ENCODE measurements at regions of chr11 and their contacts with region 1.

Region 1: DNA sequence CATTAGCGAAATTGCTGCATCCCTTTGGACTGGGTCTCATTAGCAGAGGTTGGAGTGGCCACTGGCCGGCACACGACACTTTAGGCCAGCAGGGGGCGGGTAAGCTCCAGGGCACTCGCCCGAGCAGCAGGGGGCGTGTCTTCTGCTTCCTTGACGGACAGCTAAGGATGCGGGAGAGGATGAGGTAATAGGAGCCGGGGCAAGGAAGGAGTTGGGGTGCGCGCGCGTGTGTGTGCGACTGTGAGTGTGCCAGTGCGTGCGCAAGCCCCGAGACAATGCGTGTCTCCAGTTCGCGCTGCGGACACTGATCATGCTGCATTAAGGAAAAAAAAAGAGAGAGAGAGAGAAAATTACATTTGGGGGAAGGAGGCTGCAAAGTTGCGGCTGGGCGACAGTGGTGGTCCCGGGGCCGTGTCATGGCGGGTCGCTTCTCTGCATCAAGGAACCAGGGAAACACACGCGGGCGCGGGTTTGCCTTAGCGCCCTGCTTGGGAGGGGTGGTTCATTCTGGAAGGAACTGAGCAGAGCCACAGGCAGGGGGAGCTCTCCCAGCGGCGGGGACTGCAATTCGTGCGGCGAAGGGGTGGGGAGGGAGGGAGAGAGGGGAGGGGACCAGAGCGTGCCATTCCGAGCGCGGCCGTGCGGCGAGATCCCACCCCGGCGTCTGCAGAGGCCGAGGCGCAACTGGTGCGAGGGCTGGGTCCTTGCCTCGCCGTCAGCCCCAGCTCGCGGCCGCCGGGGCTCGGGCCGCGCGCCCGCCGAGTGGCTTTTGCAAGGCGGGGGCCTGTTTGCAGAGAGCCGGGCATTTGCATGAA is at the start of gene DTX4:
- DNase-seq: peak; percentile 95 to 96 (median 95)
- ATAC-seq: peak; percentile 69 to 87 (median 78)
- H3K4me3 ChIP-seq: peak within 1 kb of the TSS; percentile 72 to 78 (median 74)
- H3K27ac ChIP-seq: peak within 1 kb of the TSS; percentile 78 to 91 (median 79)
- H3K4me1 ChIP-seq: peaks cover 0 to 28% (median 10%) of the 10 kb centered on the region in 4 donors
- H3K27me3 ChIP-seq: no peaks in the 10 kb centered on the region
- CTCF ChIP-seq: peak; percentile 70 to 93 (median 76)
- POLR2A ChIP-seq: peak; percentile 65
- total RNA-seq, gene DTX4: 10.8 to 49.1 (median 22.6) TPM

Region 2: DNA sequence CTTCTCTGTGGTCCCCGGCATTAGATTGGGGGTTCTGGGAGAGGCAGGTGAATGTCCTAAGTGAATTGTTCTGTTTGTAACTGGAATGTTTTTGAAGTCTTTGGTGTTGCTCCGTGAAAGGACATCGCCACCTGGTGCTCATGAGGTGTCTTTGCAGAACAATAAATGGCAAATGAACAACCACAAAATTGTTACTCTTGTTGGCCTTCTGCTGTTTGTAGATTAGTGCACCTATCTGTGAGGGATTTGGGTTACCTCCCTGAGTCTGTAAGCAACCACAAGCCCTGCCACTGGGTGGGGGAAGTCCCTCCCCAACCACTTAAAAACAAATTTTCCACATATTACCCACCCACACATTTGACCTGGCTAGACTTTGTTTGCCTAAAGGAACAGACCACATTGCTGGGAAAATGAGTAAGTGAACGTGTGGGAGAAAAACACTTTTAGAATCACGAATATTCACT is 36.3 kb after region 1 on chr11:
- intact Hi-C with region 1: loop called in 1 of 2 experiments (anchors 5 kb)
- DNase-seq: peak in 1 of 3 donors; percentile 46
- ATAC-seq: peak; percentile 70 to 77 (median 72)
- H3K4me3 ChIP-seq: no peak overlapping the region
- H3K27ac ChIP-seq: peak overlapping the region in 1 of 3 donors; percentile 39
- H3K4me1 ChIP-seq: peaks cover 0 to 8% (median 0%) of the 10 kb centered on the region in 4 donors
- H3K27me3 ChIP-seq: no peaks in the 10 kb centered on the region
- CTCF ChIP-seq: peak; percentile 70 to 87 (median 75)
- POLR2A ChIP-seq: no peak

Measured in right lobe of liver (tissue), 6 donors.